K562 (cell line): ENCODE measurements at regions of chr6 and their contacts with region 1.

Region 1: GRCh38 chr6:24581084-24581669 is 64.8 kb downstream of the KIAA0319 start:
- DNase-seq: peak; percentile 54 to 83 (median 61)
- ATAC-seq: peak; percentile 97
- H3K4me3 ChIP-seq: no peak overlapping the region
- H3K27ac ChIP-seq: no peak overlapping the region
- H3K4me1 ChIP-seq: no peaks in the 10 kb centered on the region
- H3K27me3 ChIP-seq: peaks cover 14 to 20% of the 10 kb centered on the region in 2 experiments
- CTCF ChIP-seq: peak; percentile 82 to 90 (median 86)
- EP300 ChIP-seq: no peak
- POLR2A ChIP-seq: no peak
- RAD21 ChIP-seq: peak; percentile 72 to 89

Region 2: DNA sequence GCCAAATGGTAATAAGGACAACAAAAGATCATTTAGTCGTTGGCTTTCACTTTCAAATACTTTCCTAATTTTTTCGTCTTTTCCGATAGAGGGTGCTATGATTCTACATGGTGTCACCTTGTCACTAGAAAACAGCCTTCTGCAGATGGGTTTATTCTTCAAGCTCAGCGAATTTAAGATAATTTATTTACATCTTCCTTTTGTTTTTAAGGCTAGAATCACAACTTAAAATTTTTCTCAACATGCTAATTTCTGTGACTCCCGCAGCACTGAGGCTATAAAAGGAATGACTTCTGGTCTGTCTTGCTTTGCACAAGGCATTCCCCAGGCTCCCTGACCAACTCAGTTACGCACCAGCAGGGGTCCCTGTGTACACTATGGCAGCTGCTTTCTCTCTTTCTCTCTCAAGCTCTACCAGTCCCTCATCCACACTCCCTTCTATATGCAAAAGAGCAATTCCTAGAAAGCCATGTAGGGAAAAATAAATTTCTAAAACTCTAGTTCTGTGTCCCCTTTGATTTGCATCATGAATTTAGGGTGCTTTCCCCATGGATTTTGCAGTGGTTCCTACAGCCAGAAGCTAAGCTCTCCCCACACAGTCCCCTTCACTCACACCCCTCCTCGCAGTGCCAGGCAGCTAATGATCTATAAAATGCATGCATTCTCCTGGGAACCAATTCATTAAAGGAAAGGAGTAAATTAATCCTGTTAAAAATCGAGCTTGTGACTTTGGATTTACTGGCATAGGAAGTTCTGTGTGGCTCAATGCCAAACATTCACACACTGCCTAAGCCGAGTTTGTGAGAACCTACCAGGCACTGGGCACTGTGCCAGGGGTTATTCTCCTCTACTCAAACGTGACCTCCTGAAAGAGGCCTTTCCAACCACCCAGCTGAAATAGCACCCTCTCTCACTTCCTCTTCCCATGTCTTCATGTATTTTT is 297.9 kb before region 1 on chr6:
- CTCF ChIA-PET with region 1: no interaction called
- POLR2A ChIA-PET with region 1: no interaction called
- in situ Hi-C with region 1: no loop called
- intact Hi-C with region 1: loop called (anchors 10 kb)
- DNase-seq: peak; percentile 40 to 72 (median 56)
- ATAC-seq: peak; percentile 98
- H3K4me3 ChIP-seq: no peak overlapping the region
- H3K27ac ChIP-seq: no peak overlapping the region
- H3K4me1 ChIP-seq: no peaks in the 10 kb centered on the region
- H3K27me3 ChIP-seq: no peaks in the 10 kb centered on the region
- CTCF ChIP-seq: peak; percentile 68 to 74 (median 72)
- EP300 ChIP-seq: no peak
- POLR2A ChIP-seq: no peak
- RAD21 ChIP-seq: peak; percentile 69 to 75

Region 3: GRCh38 chr6:24440897-24441598 is 140.1 kb before region 1 on chr6:
- CTCF ChIA-PET with region 1: no interaction called
- POLR2A ChIA-PET with region 1: no interaction called
- in situ Hi-C with region 1: no loop called
- intact Hi-C with region 1: no loop called
- DNase-seq: no peak
- ATAC-seq: no peak
- H3K4me3 ChIP-seq: no peak overlapping the region
- H3K27ac ChIP-seq: no peak overlapping the region
- H3K4me1 ChIP-seq: no peaks in the 10 kb centered on the region
- H3K27me3 ChIP-seq: peaks cover 0 to 4% of the 10 kb centered on the region in 2 experiments; a peak in 1 of 5 replicates
- CTCF ChIP-seq: no peak
- EP300 ChIP-seq: no peak
- POLR2A ChIP-seq: no peak
- RAD21 ChIP-seq: no peak

Region 4: GRCh38 chr6:24513602-24514001 is 67.6 kb before region 1 on chr6:
- CTCF ChIA-PET with region 1: no interaction called
- POLR2A ChIA-PET with region 1: no interaction called
- in situ Hi-C with region 1: no loop called
- intact Hi-C with region 1: no loop called
- DNase-seq: no peak
- ATAC-seq: no peak
- H3K4me3 ChIP-seq: no peak overlapping the region
- H3K27ac ChIP-seq: no peak overlapping the region
- H3K4me1 ChIP-seq: no peaks in the 10 kb centered on the region
- H3K27me3 ChIP-seq: no peaks in the 10 kb centered on the region
- CTCF ChIP-seq: no peak
- EP300 ChIP-seq: no peak
- POLR2A ChIP-seq: no peak
- RAD21 ChIP-seq: no peak

Region 5: DNA sequence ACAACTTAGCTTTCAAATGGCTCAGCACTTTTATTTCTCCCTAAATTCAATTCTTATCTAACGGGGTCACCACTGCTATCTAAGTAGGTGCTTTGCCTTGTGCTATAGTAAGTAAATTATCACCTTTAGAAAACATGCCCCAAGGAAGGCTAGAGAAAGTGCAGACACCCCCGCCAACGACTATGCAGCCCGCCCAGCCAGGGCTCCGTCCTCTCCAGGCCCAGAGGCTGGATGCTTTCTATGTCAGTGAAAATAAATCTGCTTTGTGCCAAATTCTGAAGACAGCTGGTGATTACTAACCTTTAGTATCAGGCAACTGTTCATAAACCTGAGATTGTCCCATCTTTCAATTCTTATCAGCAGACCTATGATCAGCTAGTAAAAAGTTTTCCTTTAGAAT is 50.5 kb after region 1 on chr6:
- CTCF ChIA-PET with region 1: no interaction called
- POLR2A ChIA-PET with region 1: no interaction called
- in situ Hi-C with region 1: no loop called
- intact Hi-C with region 1: no loop called
- DNase-seq: no peak
- ATAC-seq: no peak; the same call in 2 of the 3 replicates
- H3K4me3 ChIP-seq: no peak overlapping the region
- H3K27ac ChIP-seq: no peak overlapping the region
- H3K4me1 ChIP-seq: no peaks in the 10 kb centered on the region
- H3K27me3 ChIP-seq: peaks cover 14 to 17% of the 10 kb centered on the region in 2 experiments
- CTCF ChIP-seq: no peak
- EP300 ChIP-seq: no peak
- POLR2A ChIP-seq: no peak
- RAD21 ChIP-seq: no peak

Region 6: GRCh38 chr6:24666641-24667377 is 85.6 kb after region 1 on chr6 and contains the starts of genes ACOT13 and TDP2:
- CTCF ChIA-PET with region 1: interaction called, 5 read pairs
- POLR2A ChIA-PET with region 1: no interaction called
- in situ Hi-C with region 1: no loop called
- intact Hi-C with region 1: loop called (anchors 2 kb)
- DNase-seq: peak; percentile 97 to 100 (median 98)
- ATAC-seq: peak; percentile 91
- H3K4me3 ChIP-seq: peak within 1 kb of the TSS; percentile 63
- H3K27ac ChIP-seq: peak within 1 kb of the TSS; percentile 91
- H3K4me1 ChIP-seq: peaks cover 8 to 12% of the 10 kb centered on the region in 2 experiments; a peak in 4 of 5 replicates
- H3K27me3 ChIP-seq: no peaks in the 10 kb centered on the region
- CTCF ChIP-seq: peak; percentile 71 to 82 (median 79)
- EP300 ChIP-seq: peak; percentile 37
- POLR2A ChIP-seq: peak; percentile 94
- RAD21 ChIP-seq: peak; percentile 53 to 56; a peak in 3 of 4 replicates
- polyA plus RNA-seq, gene ACOT13: 106 to 127 TPM
- polyA plus RNA-seq, gene TDP2: 27.7 to 28.7 TPM

Region 7: GRCh38 chr6:24699521-24700359 is 118.6 kb after region 1 on chr6:
- CTCF ChIA-PET with region 1: interaction called, 67 read pairs
- POLR2A ChIA-PET with region 1: interaction called, 4 read pairs
- in situ Hi-C with region 1: loop called (anchors 5 kb)
- intact Hi-C with region 1: loop called (anchors 1 kb)
- DNase-seq: no peak
- ATAC-seq: no peak
- H3K4me3 ChIP-seq: no peak overlapping the region
- H3K27ac ChIP-seq: no peak overlapping the region
- H3K4me1 ChIP-seq: no peaks in the 10 kb centered on the region
- H3K27me3 ChIP-seq: no peaks in the 10 kb centered on the region
- CTCF ChIP-seq: no peak
- EP300 ChIP-seq: no peak
- POLR2A ChIP-seq: no peak
- RAD21 ChIP-seq: no peak

Region 8: DNA sequence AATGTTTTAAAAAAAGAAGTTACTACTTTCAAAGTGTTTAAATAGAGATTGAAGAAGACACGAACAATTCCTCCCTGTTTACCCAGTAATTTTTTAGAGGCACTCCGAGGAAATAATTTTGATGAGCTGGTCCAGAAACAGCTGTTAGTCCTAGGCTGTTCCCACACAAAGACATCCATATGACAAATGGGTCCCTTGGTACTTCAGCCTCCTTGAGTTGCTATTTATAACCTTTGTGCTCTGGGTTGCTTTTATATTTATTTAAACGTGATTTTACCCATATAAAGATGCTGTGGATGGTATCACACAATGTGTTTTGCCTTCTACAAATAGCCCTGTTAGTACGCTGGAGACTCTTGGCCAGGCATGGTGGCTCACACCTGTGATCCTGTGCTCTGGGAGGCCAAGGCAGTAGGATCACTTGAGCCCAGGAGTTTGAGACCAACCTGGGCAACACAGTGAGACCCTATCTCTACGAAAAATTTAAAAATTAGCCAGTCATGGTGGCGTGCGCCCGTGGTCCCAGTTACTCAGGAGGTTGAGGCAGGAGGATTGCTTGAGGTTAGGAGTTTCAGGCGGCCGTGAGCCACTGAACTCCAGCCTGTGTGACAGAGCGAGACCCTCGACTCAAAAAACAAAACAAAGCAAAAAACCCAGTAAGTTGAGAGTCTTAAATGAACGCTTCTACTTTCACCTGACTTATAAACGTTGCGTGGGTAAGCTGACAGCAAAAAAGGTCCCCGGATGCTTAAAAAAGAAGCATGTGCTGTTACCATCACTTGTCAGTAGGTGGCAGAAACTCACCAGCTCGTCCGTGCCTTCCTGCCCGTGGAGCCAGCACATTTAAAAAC is 274.4 kb after region 1 on chr6:
- CTCF ChIA-PET with region 1: no interaction called
- POLR2A ChIA-PET with region 1: interaction called, 3 read pairs
- in situ Hi-C with region 1: no loop called
- intact Hi-C with region 1: loop called (anchors 10 kb)
- DNase-seq: peak; percentile 79 to 83 (median 80)
- ATAC-seq: peak; percentile 94
- H3K4me3 ChIP-seq: no peak overlapping the region
- H3K27ac ChIP-seq: no peak overlapping the region
- H3K4me1 ChIP-seq: no peaks in the 10 kb centered on the region
- H3K27me3 ChIP-seq: peaks cover 13 to 24% of the 10 kb centered on the region in 2 experiments
- CTCF ChIP-seq: peak; percentile 84 to 93 (median 86)
- EP300 ChIP-seq: no peak
- POLR2A ChIP-seq: no peak
- RAD21 ChIP-seq: peak; percentile 89

Region 9: DNA sequence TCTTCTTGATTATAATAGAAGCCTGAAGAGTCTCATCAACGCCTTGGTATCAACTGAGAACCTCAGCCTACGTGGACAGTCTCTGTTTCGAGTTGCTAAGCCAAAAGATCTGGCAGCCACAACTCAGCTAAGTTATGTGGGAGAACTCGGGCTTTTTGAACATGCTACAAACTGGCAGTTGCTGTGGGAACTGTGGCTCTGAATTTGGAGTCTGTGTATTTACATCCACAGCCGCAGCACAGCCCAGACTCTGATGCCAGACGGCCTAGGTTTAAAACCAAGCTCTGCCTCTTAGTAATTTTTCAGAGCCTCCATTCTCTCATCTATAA is 318.8 kb after region 1 on chr6:
- CTCF ChIA-PET with region 1: no interaction called
- POLR2A ChIA-PET with region 1: no interaction called
- in situ Hi-C with region 1: no loop called
- intact Hi-C with region 1: no loop called
- DNase-seq: no peak
- ATAC-seq: no peak
- H3K4me3 ChIP-seq: no peak overlapping the region
- H3K27ac ChIP-seq: no peak overlapping the region
- H3K4me1 ChIP-seq: no peaks in the 10 kb centered on the region
- H3K27me3 ChIP-seq: peaks cover 25 to 28% of the 10 kb centered on the region in 2 experiments
- CTCF ChIP-seq: no peak
- EP300 ChIP-seq: no peak
- POLR2A ChIP-seq: no peak
- RAD21 ChIP-seq: no peak

Region 10: DNA sequence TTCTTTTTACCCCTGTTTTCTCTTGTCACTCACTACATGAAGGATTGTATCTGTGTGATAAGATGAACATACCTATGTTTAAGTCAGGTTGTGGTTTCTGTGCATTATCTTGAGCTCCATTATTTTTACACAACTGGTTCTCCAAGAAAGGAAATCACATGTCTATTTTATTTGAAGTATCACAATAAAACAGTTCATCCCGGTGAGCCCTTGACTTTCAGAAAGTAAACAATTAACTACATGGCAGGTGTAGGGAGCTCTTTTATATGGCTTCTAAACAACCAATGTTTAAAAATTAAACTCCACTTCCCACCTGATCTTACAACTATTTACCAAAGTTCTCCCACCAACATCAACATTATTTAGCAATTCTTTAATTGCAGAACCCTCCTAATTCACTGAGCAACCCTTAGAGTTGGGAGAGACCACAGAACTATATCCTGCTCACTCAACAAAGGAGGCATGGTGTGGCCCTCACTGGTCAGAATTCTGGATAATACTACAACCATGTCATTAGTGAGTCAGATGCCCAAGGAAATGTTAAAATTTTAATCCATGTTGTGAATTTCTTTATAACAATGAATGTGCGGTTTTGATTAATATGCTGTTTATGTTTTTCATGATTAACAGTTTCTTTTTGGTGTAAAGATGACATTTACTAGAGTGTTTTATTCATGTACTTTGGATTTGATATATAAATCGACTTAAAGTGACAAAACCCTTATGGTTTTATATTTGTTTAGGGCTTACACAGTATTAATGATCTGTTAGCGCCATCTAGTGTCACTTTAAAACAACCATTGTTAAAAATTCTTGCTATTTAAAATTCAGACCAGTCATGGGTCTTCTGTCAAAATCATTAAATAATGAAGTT is 1020.9 kb after region 1 on chr6:
- CTCF ChIA-PET with region 1: no interaction called
- POLR2A ChIA-PET with region 1: no interaction called
- in situ Hi-C with region 1: no loop called
- intact Hi-C with region 1: loop called (anchors 5 kb)
- DNase-seq: peak; percentile 35 to 62 (median 40)
- ATAC-seq: peak; percentile 63
- H3K4me3 ChIP-seq: no peak overlapping the region
- H3K27ac ChIP-seq: no peak overlapping the region
- H3K4me1 ChIP-seq: no peaks in the 10 kb centered on the region
- H3K27me3 ChIP-seq: peaks cover 9 to 10% of the 10 kb centered on the region in 2 experiments
- CTCF ChIP-seq: peak in 2 of 3 experiments; percentile 40 to 84; a peak in 4 of 6 replicates
- EP300 ChIP-seq: no peak
- POLR2A ChIP-seq: no peak
- RAD21 ChIP-seq: peak; percentile 87 to 90